ENCODE measurements at regions of chr4 and their contacts with region 1.

Region 1: GRCh38 chr4:151362404-151363164 is 37.2 kb upstream of the SH3D19 start:
- DNase-seq: peak; percentile 73 to 85 (median 79)
- ATAC-seq: peak; percentile 64 to 97 (median 96)
- H3K4me3 ChIP-seq: no peak overlapping the region
- H3K27ac ChIP-seq: no peak overlapping the region
- H3K4me1 ChIP-seq: peaks cover 0 to 4% (median 0%) of the 10 kb centered on the region in 12 donors
- H3K27me3 ChIP-seq: no peaks in the 10 kb centered on the region
- CTCF ChIP-seq: peak; percentile 93 to 100 (median 98)
- POLR2A ChIP-seq: no peak

Region 2: GRCh38 chr4:151105454-151106032 is 257.0 kb before region 1 on chr4:
- intact Hi-C with region 1: loop called in 1 of 10 experiments (anchors 5 kb)
- DNase-seq: no peak
- ATAC-seq: peak in 2 of 4 donors; percentile 12 to 49
- H3K4me3 ChIP-seq: no peak overlapping the region
- H3K27ac ChIP-seq: no peak overlapping the region
- H3K4me1 ChIP-seq: peaks cover 3 to 33% (median 16%) of the 10 kb centered on the region in 12 donors
- H3K27me3 ChIP-seq: no peaks in the 10 kb centered on the region
- CTCF ChIP-seq: no peak
- POLR2A ChIP-seq: no peak

Region 3: GRCh38 chr4:151117371-151117962 is 245.1 kb before region 1 on chr4:
- intact Hi-C with region 1: loop called (anchors 2 to 5 kb)
- DNase-seq: peak in 3 of 5 donors; percentile 48 to 54 (median 52)
- ATAC-seq: peak; percentile 41 to 59 (median 53)
- H3K4me3 ChIP-seq: no peak overlapping the region
- H3K27ac ChIP-seq: peak overlapping the region in 5 of 12 donors; percentile 10 to 48 (median 28)
- H3K4me1 ChIP-seq: peaks cover 0 to 13% (median 0%) of the 10 kb centered on the region in 12 donors
- H3K27me3 ChIP-seq: no peaks in the 10 kb centered on the region
- CTCF ChIP-seq: peak; percentile 62 to 85 (median 74)
- POLR2A ChIP-seq: no peak

Region 4: GRCh38 chr4:151129801-151130200 is 232.8 kb before region 1 on chr4:
- intact Hi-C with region 1: loop called in 1 of 10 experiments (anchors 5 kb)
- DNase-seq: no peak
- ATAC-seq: peak in 3 of 4 donors; percentile 18 to 22 (median 20)
- H3K4me3 ChIP-seq: no peak overlapping the region
- H3K27ac ChIP-seq: peak overlapping the region in 1 of 12 donors; percentile 14
- H3K4me1 ChIP-seq: peaks cover 0 to 4% (median 0%) of the 10 kb centered on the region in 12 donors
- H3K27me3 ChIP-seq: no peaks in the 10 kb centered on the region
- CTCF ChIP-seq: no peak
- POLR2A ChIP-seq: no peak

Region 5: GRCh38 chr4:151276787-151277562 is 85.6 kb before region 1 on chr4 and contains the start of gene PRSS48:
- intact Hi-C with region 1: loop called in 9 of 10 experiments (anchors 1 to 5 kb)
- DNase-seq: peak; percentile 54 to 75 (median 59)
- ATAC-seq: peak; percentile 47 to 81 (median 78)
- H3K4me3 ChIP-seq: no peak within 1 kb of the TSS
- H3K27ac ChIP-seq: no peak within 1 kb of the TSS
- H3K4me1 ChIP-seq: peaks cover 0 to 60% (median 11%) of the 10 kb centered on the region in 12 donors
- H3K27me3 ChIP-seq: no peaks in the 10 kb centered on the region
- CTCF ChIP-seq: peak; percentile 60 to 80 (median 70)
- POLR2A ChIP-seq: no peak
- total RNA-seq, gene PRSS48: not detected

Region 6: GRCh38 chr4:151325111-151325948 is 37.3 kb before region 1 on chr4 and contains the start of gene SH3D19:
- intact Hi-C with region 1: loop called in 1 of 10 experiments (anchors 5 kb)
- DNase-seq: peak; percentile 79 to 88 (median 83)
- ATAC-seq: peak; percentile 88 to 96 (median 92)
- H3K4me3 ChIP-seq: peak within 1 kb of the TSS; percentile 68 to 93 (median 75)
- H3K27ac ChIP-seq: peak within 1 kb of the TSS; percentile 85 to 96 (median 94)
- H3K4me1 ChIP-seq: peaks cover 0 to 37% (median 21%) of the 10 kb centered on the region in 12 donors
- H3K27me3 ChIP-seq: peaks cover 0 to 18% (median 0%) of the 10 kb centered on the region in 9 donors
- CTCF ChIP-seq: peak in 3 of 12 donors; percentile 8 to 21 (median 16)
- POLR2A ChIP-seq: peak in 1 of 2 donors; percentile 63
- total RNA-seq, gene SH3D19: 91.1 to 173 (median 139) TPM

Region 7: DNA sequence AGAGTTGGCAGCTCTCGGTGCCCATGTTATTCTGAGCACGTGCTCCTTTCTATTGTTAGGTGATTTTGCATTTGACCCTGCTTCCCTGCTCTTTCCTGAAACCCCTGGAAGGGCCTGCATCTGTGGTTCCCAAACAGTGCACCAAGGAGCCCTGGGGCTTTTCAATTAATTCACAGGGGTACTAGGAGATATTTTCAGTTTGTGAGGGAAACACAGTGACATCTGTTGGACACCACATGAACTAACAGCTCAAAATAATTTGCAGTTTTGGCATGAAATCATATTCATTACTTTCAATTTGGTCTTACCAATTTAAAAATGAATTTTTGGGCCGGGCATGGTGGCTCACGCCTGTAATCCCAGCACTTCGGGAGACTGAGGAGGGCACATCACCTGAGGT is 241.7 kb after region 1 on chr4:
- intact Hi-C with region 1: loop called in 2 of 10 experiments (anchors 10 kb)
- DNase-seq: no peak
- ATAC-seq: no peak
- H3K4me3 ChIP-seq: no peak overlapping the region
- H3K27ac ChIP-seq: no peak overlapping the region
- H3K4me1 ChIP-seq: peaks cover 0 to 9% (median 0%) of the 10 kb centered on the region in 12 donors
- H3K27me3 ChIP-seq: no peaks in the 10 kb centered on the region
- CTCF ChIP-seq: peak in 8 of 12 donors; percentile 14 to 44 (median 18)
- POLR2A ChIP-seq: no peak

Region 8: GRCh38 chr4:151674804-151675391 is 312.3 kb after region 1 on chr4:
- intact Hi-C with region 1: no loop called
- DNase-seq: peak in 3 of 5 donors; percentile 51 to 74 (median 61)
- ATAC-seq: peak; percentile 70 to 79 (median 72)
- H3K4me3 ChIP-seq: peak overlapping the region in 10 of 12 donors; percentile 10 to 48 (median 38)
- H3K27ac ChIP-seq: peak overlapping the region in 10 of 12 donors; percentile 23 to 76 (median 66)
- H3K4me1 ChIP-seq: peaks cover 0 to 57% (median 8%) of the 10 kb centered on the region in 12 donors
- H3K27me3 ChIP-seq: no peaks in the 10 kb centered on the region
- CTCF ChIP-seq: peak in 4 of 12 donors; percentile 13 to 36 (median 24)
- POLR2A ChIP-seq: no peak